ENCODE measurements at regions of chr18 and their contacts with region 1.

Region 1: GRCh38 chr18:58447402-58448095 is 181.3 kb downstream of the ALPK2 start:
- DNase-seq: no peak
- ATAC-seq: no peak
- H3K4me3 ChIP-seq: peak overlapping the region; percentile 28 to 73 (median 64)
- H3K27ac ChIP-seq: peak overlapping the region; percentile 91 to 98 (median 97)
- H3K4me1 ChIP-seq: no peaks in the 10 kb centered on the region
- H3K27me3 ChIP-seq: no peaks in the 10 kb centered on the region
- CTCF ChIP-seq: no peak
- POLR2A ChIP-seq: peak; percentile 35

Region 2: GRCh38 chr18:58402247-58402646 is 45.3 kb before region 1 on chr18:
- intact Hi-C with region 1: loop called in 1 of 2 experiments (anchors 5 kb)
- DNase-seq: no peak
- ATAC-seq: peak in 1 of 4 donors; percentile 8
- H3K4me3 ChIP-seq: no peak overlapping the region
- H3K27ac ChIP-seq: peak overlapping the region; percentile 29 to 99 (median 76)
- H3K4me1 ChIP-seq: peaks cover 0 to 81% (median 22%) of the 10 kb centered on the region in 4 donors
- H3K27me3 ChIP-seq: no peaks in the 10 kb centered on the region
- CTCF ChIP-seq: peak in 1 of 4 donors; percentile 26
- POLR2A ChIP-seq: no peak

Region 3: GRCh38 chr18:58412844-58413666 is 34.5 kb before region 1 on chr18:
- intact Hi-C with region 1: loop called in 1 of 2 experiments (anchors 5 kb)
- DNase-seq: peak in 2 of 3 donors; percentile 70 to 76
- ATAC-seq: peak in 2 of 4 donors; percentile 4 to 13
- H3K4me3 ChIP-seq: peak overlapping the region in 2 of 3 donors; percentile 12 to 20
- H3K27ac ChIP-seq: peak overlapping the region; percentile 67 to 99 (median 84)
- H3K4me1 ChIP-seq: peaks cover 0 to 84% (median 33%) of the 10 kb centered on the region in 4 donors
- H3K27me3 ChIP-seq: no peaks in the 10 kb centered on the region
- CTCF ChIP-seq: no peak
- POLR2A ChIP-seq: no peak